AG04450 (cell line): ENCODE measurements at regions of chr12 and their contacts with region 1.

Region 1: GRCh38 chr12:124906606-124907261 is 7.7 kb downstream of the UBC start:
- DNase-seq: peak; percentile 76
- H3K4me3 ChIP-seq: no peak overlapping the region
- H3K27ac ChIP-seq: no peak overlapping the region
- H3K27me3 ChIP-seq: no peaks in the 10 kb centered on the region
- CTCF ChIP-seq: peak; percentile 99

Region 2: GRCh38 chr12:124036674-124037109 is 870.0 kb before region 1 on chr12:
- CTCF ChIA-PET with region 1: interaction called, 19 read pairs
- POLR2A ChIA-PET with region 1: no interaction called
- DNase-seq: peak; percentile 15
- H3K4me3 ChIP-seq: no peak overlapping the region
- H3K27ac ChIP-seq: no peak overlapping the region
- H3K27me3 ChIP-seq: no peaks in the 10 kb centered on the region
- CTCF ChIP-seq: peak; percentile 93

Region 3: GRCh38 chr12:124767066-124767821 is 139.5 kb before region 1 on chr12:
- CTCF ChIA-PET with region 1: interaction called, 20 read pairs
- POLR2A ChIA-PET with region 1: no interaction called
- DNase-seq: no peak
- H3K4me3 ChIP-seq: no peak overlapping the region
- H3K27ac ChIP-seq: no peak overlapping the region
- H3K27me3 ChIP-seq: no peaks in the 10 kb centered on the region
- CTCF ChIP-seq: peak; percentile 97

Region 4: GRCh38 chr12:124884587-124885438 is 21.9 kb before region 1 on chr12:
- CTCF ChIA-PET with region 1: interaction called, 15 read pairs
- POLR2A ChIA-PET with region 1: no interaction called
- DNase-seq: no peak
- H3K4me3 ChIP-seq: no peak overlapping the region
- H3K27ac ChIP-seq: no peak overlapping the region
- H3K27me3 ChIP-seq: no peaks in the 10 kb centered on the region
- CTCF ChIP-seq: no peak

Region 5: GRCh38 chr12:124927201-124928094 is 20.7 kb after region 1 on chr12:
- CTCF ChIA-PET with region 1: interaction called, 19 read pairs
- POLR2A ChIA-PET with region 1: interaction called, 10 read pairs
- DNase-seq: no peak
- H3K4me3 ChIP-seq: peak overlapping the region; percentile 78
- H3K27ac ChIP-seq: peak overlapping the region; percentile 97
- H3K27me3 ChIP-seq: no peaks in the 10 kb centered on the region
- CTCF ChIP-seq: no peak

Region 6: GRCh38 chr12:125023065-125023464 is 116.3 kb after region 1 on chr12:
- CTCF ChIA-PET with region 1: no interaction called
- POLR2A ChIA-PET with region 1: no interaction called
- DNase-seq: no peak
- H3K4me3 ChIP-seq: no peak overlapping the region
- H3K27ac ChIP-seq: no peak overlapping the region
- H3K27me3 ChIP-seq: no peaks in the 10 kb centered on the region
- CTCF ChIP-seq: no peak